ENCODE measurements at regions of chr22 and their contacts with region 1.

Region 1: DNA sequence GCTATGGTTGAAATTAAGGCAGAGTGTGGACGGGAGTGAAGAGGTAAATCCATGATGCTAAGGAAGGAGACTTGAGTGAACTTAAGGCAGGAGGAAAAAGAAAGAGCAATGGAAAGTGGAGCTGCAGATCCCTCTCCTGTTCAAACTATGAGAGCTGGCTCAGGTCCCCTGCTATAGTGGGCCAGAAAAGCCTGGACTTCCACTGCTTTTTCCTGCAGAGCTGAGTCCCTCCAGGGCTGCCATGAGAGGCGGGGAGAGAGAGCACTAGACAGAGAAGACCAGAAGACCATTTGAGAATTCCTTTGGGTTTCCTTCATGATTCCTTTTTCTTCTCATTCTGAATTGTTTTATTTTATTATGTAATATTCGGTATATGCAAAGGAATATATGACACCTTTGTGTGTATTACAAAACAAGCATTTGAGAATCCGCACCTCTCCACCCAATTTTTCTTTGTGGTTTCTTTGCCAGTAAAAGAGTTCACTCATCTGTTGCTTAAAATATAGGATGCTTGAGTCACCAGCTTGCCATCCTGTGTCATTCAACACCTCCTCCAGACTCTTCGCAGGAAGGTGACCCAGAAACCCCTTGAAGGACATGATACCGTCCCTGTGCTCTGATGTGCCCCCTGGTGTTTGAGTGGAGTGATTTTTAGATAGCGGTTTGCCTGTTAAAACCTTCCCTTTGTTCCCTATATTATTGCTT is 24.4 kb downstream of the SREBF2 start:
- DNase-seq: peak; percentile 93
- H3K4me3 Mint-ChIP-seq: peak overlapping the region; percentile 11
- H3K27ac Mint-ChIP-seq: peak overlapping the region; percentile 95
- H3K4me1 Mint-ChIP-seq: peaks cover 77% of the 10 kb centered on the region
- H3K27me3 Mint-ChIP-seq: no peaks in the 10 kb centered on the region

Region 2: GRCh38 chr22:41320416-41321240 is 536.7 kb before region 1 on chr22:
- CTCF ChIA-PET with region 1: no interaction called
- intact Hi-C with region 1: no loop called
- DNase-seq: no peak
- H3K4me3 Mint-ChIP-seq: no peak overlapping the region
- H3K27ac Mint-ChIP-seq: no peak overlapping the region
- H3K4me1 Mint-ChIP-seq: peaks cover 5% of the 10 kb centered on the region
- H3K27me3 Mint-ChIP-seq: no peaks in the 10 kb centered on the region

Region 3: GRCh38 chr22:41746567-41747400 is 110.5 kb before region 1 on chr22:
- CTCF ChIA-PET with region 1: interaction called, 5 read pairs
- intact Hi-C with region 1: loop called (anchors 1 kb)
- DNase-seq: peak; percentile 83
- H3K4me3 Mint-ChIP-seq: no peak overlapping the region
- H3K27ac Mint-ChIP-seq: no peak overlapping the region
- H3K4me1 Mint-ChIP-seq: peaks cover 6% of the 10 kb centered on the region
- H3K27me3 Mint-ChIP-seq: no peaks in the 10 kb centered on the region

Region 4: DNA sequence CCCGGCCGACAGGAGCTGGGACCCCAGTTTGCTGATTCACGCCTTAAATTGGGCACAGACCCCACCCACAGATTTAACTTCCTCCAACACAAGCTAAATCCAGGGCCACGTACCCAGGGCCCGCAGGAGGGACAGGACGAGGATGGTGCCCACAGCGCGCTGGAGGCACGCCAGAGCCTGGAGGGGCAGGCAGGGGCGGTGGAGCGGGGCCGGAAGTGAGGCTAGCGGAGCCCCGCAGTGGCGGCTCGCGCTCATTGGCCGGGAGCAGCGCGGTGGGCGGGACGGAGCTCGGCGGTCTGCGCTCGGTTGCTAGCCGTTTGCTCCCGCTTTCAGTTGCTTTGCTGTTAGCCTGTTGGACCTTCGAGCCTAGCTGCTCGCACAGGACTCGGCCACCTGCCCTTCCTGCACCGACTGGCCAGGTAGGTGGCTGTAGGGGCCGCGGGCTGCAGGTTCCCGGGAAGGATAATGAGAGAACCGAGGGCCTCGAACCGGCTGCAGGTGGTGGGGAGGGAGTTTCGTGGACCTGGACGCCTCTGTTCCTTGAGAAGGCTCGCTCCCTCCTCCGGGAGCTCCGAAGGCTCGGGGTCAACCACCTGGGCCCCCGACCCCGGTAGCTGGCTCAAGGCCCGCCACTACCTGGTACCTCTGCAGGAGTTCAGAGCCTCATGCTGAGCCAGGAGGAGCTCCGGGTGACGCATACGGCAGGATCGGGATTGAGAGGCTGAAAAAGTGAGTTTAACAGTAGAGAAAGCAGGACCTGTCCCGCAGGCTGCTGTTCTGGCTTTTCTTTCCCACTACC is 56.8 kb before region 1 on chr22 and contains the start of gene CCDC134:
- CTCF ChIA-PET with region 1: no interaction called
- intact Hi-C with region 1: loop called (anchors 2 kb)
- DNase-seq: peak; percentile 93
- H3K4me3 Mint-ChIP-seq: peak within 1 kb of the TSS; percentile 84
- H3K27ac Mint-ChIP-seq: peak within 1 kb of the TSS; percentile 95
- H3K4me1 Mint-ChIP-seq: peaks cover 38% of the 10 kb centered on the region
- H3K27me3 Mint-ChIP-seq: no peaks in the 10 kb centered on the region
- total RNA-seq, gene CCDC134: 17.0 to 19.3 TPM

Region 5: DNA sequence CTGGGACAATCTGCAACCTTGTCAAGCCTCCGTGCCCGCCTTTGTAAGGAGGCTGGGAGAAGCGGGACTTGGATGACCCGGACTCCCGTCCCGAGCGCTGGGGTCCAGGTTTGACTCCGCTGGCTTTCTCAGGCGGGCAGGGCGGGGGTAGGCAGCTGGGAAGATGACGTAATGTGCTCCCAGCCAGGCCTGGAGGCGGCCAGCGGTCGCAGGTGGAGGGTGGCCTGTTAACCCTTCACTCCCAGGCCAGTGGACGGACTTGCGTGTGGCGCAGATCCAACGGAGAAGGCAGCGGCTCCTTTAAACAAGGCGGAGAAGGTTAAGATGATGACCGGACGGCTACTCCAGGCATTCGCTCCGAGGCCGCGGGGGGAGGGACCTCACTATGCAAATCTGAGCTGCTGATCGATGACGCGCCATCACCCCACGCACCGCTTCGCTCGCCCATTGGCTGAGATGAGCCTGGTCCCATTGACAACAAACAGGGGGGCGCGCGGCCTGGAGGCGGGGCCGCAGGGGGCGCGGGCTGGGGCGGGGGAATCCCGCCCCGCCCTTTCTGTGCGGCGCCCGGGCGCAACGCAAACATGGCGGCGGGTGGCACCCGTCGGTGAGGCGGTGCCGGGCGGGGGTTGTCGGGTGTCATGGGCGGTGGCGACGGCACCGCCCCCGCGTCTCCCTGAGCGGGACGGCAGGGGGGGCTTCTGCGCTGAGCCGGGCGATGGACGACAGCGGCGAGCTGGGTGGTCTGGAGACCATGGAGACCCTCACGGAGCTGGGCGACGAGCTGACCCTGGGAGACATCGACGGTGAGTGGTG is 24.5 kb before region 1 on chr22 and contains the start of gene SREBF2:
- CTCF ChIA-PET with region 1: interaction called, 7 read pairs
- intact Hi-C with region 1: loop called (anchors 1 kb)
- DNase-seq: peak; percentile 100
- H3K4me3 Mint-ChIP-seq: peak within 1 kb of the TSS; percentile 98
- H3K27ac Mint-ChIP-seq: peak within 1 kb of the TSS; percentile 100
- H3K4me1 Mint-ChIP-seq: peaks cover 42% of the 10 kb centered on the region
- H3K27me3 Mint-ChIP-seq: no peaks in the 10 kb centered on the region
- total RNA-seq, gene SREBF2: 143 to 147 TPM

Region 6: GRCh38 chr22:41873391-41873790 is 16.1 kb after region 1 on chr22:
- CTCF ChIA-PET with region 1: interaction called, 31 read pairs
- intact Hi-C with region 1: loop called (anchors 1 kb)
- DNase-seq: peak; percentile 78
- H3K4me3 Mint-ChIP-seq: peak overlapping the region; percentile 62
- H3K27ac Mint-ChIP-seq: peak overlapping the region; percentile 95
- H3K4me1 Mint-ChIP-seq: peaks cover 75% of the 10 kb centered on the region
- H3K27me3 Mint-ChIP-seq: no peaks in the 10 kb centered on the region

Measured in activated naive CD4-positive, alpha-beta T cell treated with anti-CD3 and anti-CD28 coated beads for 36 hours (primary cell).